Posterior cingulate gyrus (tissue), 11 donors: ENCODE measurements at regions of chr12 and their contacts with region 1.

Region 1: GRCh38 chr12:100799770-100800169 is 5.2 kb downstream of the ANO4 start:
- DNase-seq: peak in 5 of 10 donors; percentile 14 to 78 (median 33)

Region 2: DNA sequence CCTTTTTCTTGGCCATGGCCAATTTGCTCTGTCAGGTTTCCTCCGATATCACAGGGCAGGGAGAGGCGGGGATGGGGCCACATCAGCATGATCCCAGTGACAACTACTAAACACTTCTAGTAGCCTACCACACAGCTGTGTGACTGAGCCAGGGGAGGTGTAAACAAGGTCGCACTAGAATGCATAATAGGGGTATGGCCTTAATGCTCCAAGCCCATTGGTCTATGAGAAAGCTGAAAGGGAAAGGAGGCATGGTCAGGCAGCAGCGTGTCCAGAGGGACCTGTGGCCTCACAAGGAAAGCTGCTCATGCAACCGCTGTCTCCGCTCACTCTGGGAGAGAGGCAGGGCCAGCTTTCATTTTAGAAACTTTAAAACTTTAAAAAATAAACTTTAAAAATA is 626.7 kb before region 1 on chr12:
- intact Hi-C with region 1: no loop called
- DNase-seq: no peak

Region 3: GRCh38 chr12:101078536-101079285 is 278.9 kb after region 1 on chr12:
- intact Hi-C with region 1: loop called (anchors 2 kb)
- DNase-seq: no peak